ENCODE measurements at regions of chr5 and their contacts with region 1.

Region 1: DNA sequence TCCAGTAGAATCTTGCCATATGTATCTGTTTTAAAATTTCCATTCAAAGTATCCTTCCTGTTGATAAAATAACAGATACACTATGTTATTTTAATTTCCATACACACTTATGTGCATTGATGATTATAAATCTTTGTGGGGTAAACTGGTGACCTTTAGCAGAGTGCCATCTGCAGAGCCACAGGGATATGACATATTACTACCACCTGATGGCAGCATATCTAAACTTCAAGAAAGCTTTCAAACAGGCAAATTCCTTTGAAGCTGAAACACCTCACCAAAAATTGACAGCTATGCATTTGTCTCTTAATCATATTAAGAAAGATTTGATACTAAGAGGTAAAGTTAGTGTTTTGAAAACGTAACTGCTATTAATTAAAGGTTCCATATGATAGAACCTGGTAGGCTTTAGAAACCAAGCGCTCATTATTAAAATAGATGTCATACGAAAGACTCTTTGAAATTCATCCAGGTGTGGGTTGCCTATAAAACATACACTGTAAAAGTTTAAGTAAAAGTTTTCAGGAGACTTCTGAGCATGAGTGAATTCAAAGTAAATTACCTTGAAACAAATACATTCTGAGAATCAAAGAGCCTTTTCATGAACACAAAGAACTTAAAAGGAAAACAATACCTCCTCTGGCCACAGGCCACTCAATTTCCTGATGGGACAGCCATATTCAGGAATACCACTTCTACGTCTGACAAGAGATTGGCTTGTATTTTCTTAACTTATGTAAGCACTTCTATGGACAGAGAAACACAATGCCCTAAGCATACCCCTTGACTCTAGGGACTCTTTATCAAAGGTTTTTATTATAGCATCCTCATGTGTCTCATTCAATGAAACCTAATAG is 93.3 kb downstream of the KIAA0825 start:
- DNase-seq: peak; percentile 20
- ATAC-seq: peak; percentile 74
- H3K4me3 Mint-ChIP-seq: no peak overlapping the region
- H3K27ac Mint-ChIP-seq: no peak overlapping the region
- H3K4me1 Mint-ChIP-seq: no peaks in the 10 kb centered on the region
- H3K27me3 Mint-ChIP-seq: no peaks in the 10 kb centered on the region

Region 2: GRCh38 chr5:94481059-94481458 is 44.0 kb before region 1 on chr5:
- CTCF ChIA-PET with region 1: no interaction called
- POLR2A ChIA-PET with region 1: no interaction called
- intact Hi-C with region 1: no loop called
- DNase-seq: no peak
- ATAC-seq: no peak
- H3K4me3 Mint-ChIP-seq: no peak overlapping the region
- H3K27ac Mint-ChIP-seq: no peak overlapping the region
- H3K4me1 Mint-ChIP-seq: no peaks in the 10 kb centered on the region
- H3K27me3 Mint-ChIP-seq: no peaks in the 10 kb centered on the region

Region 3: GRCh38 chr5:94693043-94693822 is 168.2 kb after region 1 on chr5:
- CTCF ChIA-PET with region 1: interaction called, 5 read pairs
- POLR2A ChIA-PET with region 1: no interaction called
- intact Hi-C with region 1: loop called (anchors 1 to 5 kb)
- DNase-seq: no peak
- ATAC-seq: no peak
- H3K4me3 Mint-ChIP-seq: no peak overlapping the region
- H3K27ac Mint-ChIP-seq: no peak overlapping the region
- H3K4me1 Mint-ChIP-seq: no peaks in the 10 kb centered on the region
- H3K27me3 Mint-ChIP-seq: no peaks in the 10 kb centered on the region

Measured in activated CD4-positive, alpha-beta T cell treated with anti-CD3 and anti-CD28 coated beads for 36 hours (primary cell).